Common myeloid progenitor, CD34-positive (primary cell): ENCODE measurements at regions of chr1 and their contacts with region 1.

Region 1: DNA sequence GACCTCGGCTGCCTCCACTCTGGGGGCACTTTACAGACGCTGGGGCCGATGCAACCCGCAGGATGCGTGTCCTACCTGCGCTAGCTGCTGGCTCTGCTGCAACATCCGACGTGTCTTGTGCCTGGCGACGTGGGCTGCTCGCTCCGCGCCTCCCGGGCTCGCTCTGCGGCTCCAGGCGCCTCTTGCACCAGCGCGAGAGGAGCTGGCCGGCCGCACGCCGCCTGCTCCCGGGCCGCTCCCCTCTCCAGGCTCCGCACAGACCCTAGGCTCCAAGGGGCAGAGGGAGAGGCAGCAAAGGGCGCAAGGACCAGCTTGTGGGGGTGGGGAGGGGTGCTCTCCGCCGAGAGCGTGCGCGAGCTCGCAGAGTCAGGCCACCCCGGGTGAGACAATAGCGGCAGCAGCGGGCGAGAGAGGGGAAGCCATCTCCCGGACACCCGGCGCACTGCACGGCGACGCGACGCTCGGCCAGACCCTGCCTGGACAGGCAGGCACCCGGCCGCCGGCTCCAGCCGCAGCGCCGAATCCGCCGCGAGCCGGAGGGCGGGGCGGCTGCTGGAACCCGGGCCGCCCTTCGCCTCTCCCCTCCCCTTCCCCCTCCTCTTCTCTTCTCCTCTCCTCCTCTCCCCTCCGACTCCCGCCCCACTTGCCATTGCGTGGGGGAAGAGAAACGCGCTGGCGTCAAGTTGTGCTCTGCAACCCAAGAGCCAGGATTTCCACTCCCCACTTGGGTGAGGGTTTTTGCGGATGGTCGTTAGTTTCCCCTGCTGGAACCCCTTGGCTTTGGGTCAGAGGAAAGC is at the start of gene PIK3C2B:
- DNase-seq: peak; percentile 71 to 86 (median 77)
- H3K4me3 ChIP-seq: peak within 1 kb of the TSS; percentile 72 to 95 (median 84)
- H3K27ac ChIP-seq: peak within 1 kb of the TSS in 1 of 2 experiments; percentile 76
- H3K4me1 ChIP-seq: peaks cover 9 to 65% (median 45%) of the 10 kb centered on the region in 4 experiments
- H3K27me3 ChIP-seq: no peaks in the 10 kb centered on the region

Region 2: DNA sequence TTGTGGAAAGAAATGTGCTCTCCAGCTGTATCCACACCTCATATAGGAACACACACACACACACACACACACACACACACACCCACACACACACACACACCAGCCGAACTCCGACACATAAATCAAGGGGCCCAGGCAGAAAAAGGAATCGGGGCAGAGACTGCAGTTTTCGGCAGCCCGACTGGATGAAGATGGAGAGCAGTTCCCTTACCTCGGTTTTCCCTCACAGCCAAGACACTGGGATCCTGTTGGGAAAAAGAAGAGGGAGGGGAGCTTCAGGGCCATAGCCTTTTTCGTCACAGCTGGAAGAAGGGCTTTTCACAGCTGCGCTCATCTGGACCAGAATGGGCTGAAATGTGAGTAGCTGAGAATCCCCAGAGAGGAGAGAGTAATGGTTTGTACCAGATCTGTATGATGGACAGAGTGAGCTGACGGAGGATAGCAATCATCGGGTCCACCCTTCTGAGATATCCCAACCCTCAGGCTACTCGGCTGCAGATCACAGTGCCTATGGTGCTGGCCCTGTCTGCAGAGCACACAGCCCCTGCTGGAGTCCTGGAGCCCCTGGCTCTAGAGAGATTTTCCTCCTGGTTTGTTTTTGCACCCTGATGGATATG is 37.5 kb before region 1 on chr1:
- CTCF ChIA-PET with region 1: interaction called, 916 read pairs
- POLR2A ChIA-PET with region 1: interaction called, 8 read pairs
- DNase-seq: peak; percentile 28 to 67 (median 47)
- H3K4me3 ChIP-seq: no peak overlapping the region
- H3K27ac ChIP-seq: no peak overlapping the region
- H3K4me1 ChIP-seq: peaks cover 14 to 72% (median 55%) of the 10 kb centered on the region in 4 experiments
- H3K27me3 ChIP-seq: no peaks in the 10 kb centered on the region

Region 3: GRCh38 chr1:204465546-204466415 is 28.7 kb before region 1 on chr1:
- CTCF ChIA-PET with region 1: interaction called, 31 read pairs
- POLR2A ChIA-PET with region 1: interaction called, 8 read pairs
- DNase-seq: peak; percentile 71 to 90 (median 84)
- H3K4me3 ChIP-seq: peak overlapping the region in 2 of 7 experiments; percentile 11 to 24
- H3K27ac ChIP-seq: peak overlapping the region in 1 of 2 experiments; percentile 1
- H3K4me1 ChIP-seq: peaks cover 12 to 70% (median 64%) of the 10 kb centered on the region in 4 experiments
- H3K27me3 ChIP-seq: no peaks in the 10 kb centered on the region

Region 4: DNA sequence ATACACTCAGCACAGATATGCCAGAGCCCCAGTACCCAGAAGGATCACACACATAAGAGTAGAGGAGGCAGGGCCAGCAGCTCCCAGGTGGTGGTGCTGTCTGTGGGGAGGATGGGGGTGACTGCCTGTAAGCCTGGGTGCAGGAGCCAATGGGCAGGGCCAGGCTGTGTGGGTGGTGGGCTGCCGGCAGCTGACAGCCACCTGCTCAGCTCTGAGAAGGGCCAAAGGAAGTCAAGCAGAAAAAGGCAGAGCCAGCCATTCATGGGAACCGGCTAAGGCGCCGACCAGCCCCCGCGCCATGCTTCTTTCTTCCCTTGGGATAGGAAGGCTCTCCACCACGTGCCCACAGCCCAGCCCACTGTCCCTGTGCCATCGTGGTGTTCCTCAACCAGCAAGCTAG is 14.0 kb before region 1 on chr1:
- CTCF ChIA-PET with region 1: interaction called, 243 read pairs
- POLR2A ChIA-PET with region 1: interaction called, 4 read pairs
- DNase-seq: no peak
- H3K4me3 ChIP-seq: no peak overlapping the region
- H3K27ac ChIP-seq: no peak overlapping the region
- H3K4me1 ChIP-seq: peaks cover 8 to 90% (median 51%) of the 10 kb centered on the region in 4 experiments
- H3K27me3 ChIP-seq: no peaks in the 10 kb centered on the region

Region 5: GRCh38 chr1:204506961-204507387 is 12.5 kb after region 1 on chr1:
- CTCF ChIA-PET with region 1: interaction called, 41 read pairs
- POLR2A ChIA-PET with region 1: interaction called, 9 read pairs
- DNase-seq: peak; percentile 95 to 98 (median 98)
- H3K4me3 ChIP-seq: peak overlapping the region in 6 of 7 experiments; percentile 65 to 95 (median 80)
- H3K27ac ChIP-seq: peak overlapping the region; percentile 89 to 99
- H3K4me1 ChIP-seq: peaks cover 3 to 34% (median 14%) of the 10 kb centered on the region in 4 experiments
- H3K27me3 ChIP-seq: no peaks in the 10 kb centered on the region

Region 6: GRCh38 chr1:204751894-204752687 is 257.6 kb after region 1 on chr1:
- CTCF ChIA-PET with region 1: no interaction called
- POLR2A ChIA-PET with region 1: no interaction called
- DNase-seq: no peak
- H3K4me3 ChIP-seq: no peak overlapping the region
- H3K27ac ChIP-seq: no peak overlapping the region
- H3K4me1 ChIP-seq: peaks cover 1 to 8% (median 8%) of the 10 kb centered on the region in 4 experiments
- H3K27me3 ChIP-seq: peaks cover 0 to 5% (median 0%) of the 10 kb centered on the region in 5 experiments

Region 7: GRCh38 chr1:204763706-204764427 is 269.4 kb after region 1 on chr1:
- CTCF ChIA-PET with region 1: no interaction called
- POLR2A ChIA-PET with region 1: no interaction called
- DNase-seq: peak; percentile 69 to 84 (median 83)
- H3K4me3 ChIP-seq: peak overlapping the region in 2 of 7 experiments; percentile 12 to 48
- H3K27ac ChIP-seq: no peak overlapping the region
- H3K4me1 ChIP-seq: peaks cover 0 to 10% (median 5%) of the 10 kb centered on the region in 4 experiments
- H3K27me3 ChIP-seq: peaks cover 0 to 23% (median 2%) of the 10 kb centered on the region in 5 experiments